ENCODE measurements at regions of chr4 and their contacts with region 1.

Region 1: GRCh38 chr4:73161527-73162185 is 92.1 kb upstream of the COX18 start:
- DNase-seq: no peak
- ATAC-seq: no peak
- H3K4me3 ChIP-seq: no peak overlapping the region
- H3K4me3 Mint-ChIP-seq: no peak overlapping the region
- H3K27ac ChIP-seq: no peak overlapping the region
- H3K27ac Mint-ChIP-seq: no peak overlapping the region
- H3K4me1 ChIP-seq: no peaks in the 10 kb centered on the region
- H3K4me1 Mint-ChIP-seq: no peaks in the 10 kb centered on the region
- H3K27me3 ChIP-seq: no peaks in the 10 kb centered on the region
- H3K27me3 Mint-ChIP-seq: no peaks in the 10 kb centered on the region
- CTCF ChIP-seq: no peak

Region 2: GRCh38 chr4:72817012-72817411 is 344.6 kb before region 1 on chr4:
- CTCF ChIA-PET with region 1: no interaction called
- POLR2A ChIA-PET with region 1: no interaction called
- intact Hi-C with region 1: no loop called
- DNase-seq: no peak
- ATAC-seq: no peak
- H3K4me3 ChIP-seq: no peak overlapping the region
- H3K4me3 Mint-ChIP-seq: no peak overlapping the region
- H3K27ac ChIP-seq: no peak overlapping the region
- H3K27ac Mint-ChIP-seq: no peak overlapping the region
- H3K4me1 ChIP-seq: no peaks in the 10 kb centered on the region
- H3K4me1 Mint-ChIP-seq: no peaks in the 10 kb centered on the region
- H3K27me3 ChIP-seq: no peaks in the 10 kb centered on the region
- H3K27me3 Mint-ChIP-seq: no peaks in the 10 kb centered on the region
- CTCF ChIP-seq: no peak

Region 3: GRCh38 chr4:73007526-73008100 is 154.0 kb before region 1 on chr4:
- CTCF ChIA-PET with region 1: no interaction called
- POLR2A ChIA-PET with region 1: no interaction called
- intact Hi-C with region 1: no loop called
- DNase-seq: no peak
- ATAC-seq: no peak
- H3K4me3 ChIP-seq: no peak overlapping the region
- H3K4me3 Mint-ChIP-seq: no peak overlapping the region
- H3K27ac ChIP-seq: no peak overlapping the region
- H3K27ac Mint-ChIP-seq: no peak overlapping the region
- H3K4me1 ChIP-seq: peaks cover 0 to 4% of the 10 kb centered on the region in 2 donors
- H3K4me1 Mint-ChIP-seq: peaks cover 5% of the 10 kb centered on the region
- H3K27me3 ChIP-seq: peaks cover 0 to 7% (median 2%) of the 10 kb centered on the region in 4 experiments
- H3K27me3 Mint-ChIP-seq: peaks cover 23% of the 10 kb centered on the region
- CTCF ChIP-seq: no peak

Region 4: DNA sequence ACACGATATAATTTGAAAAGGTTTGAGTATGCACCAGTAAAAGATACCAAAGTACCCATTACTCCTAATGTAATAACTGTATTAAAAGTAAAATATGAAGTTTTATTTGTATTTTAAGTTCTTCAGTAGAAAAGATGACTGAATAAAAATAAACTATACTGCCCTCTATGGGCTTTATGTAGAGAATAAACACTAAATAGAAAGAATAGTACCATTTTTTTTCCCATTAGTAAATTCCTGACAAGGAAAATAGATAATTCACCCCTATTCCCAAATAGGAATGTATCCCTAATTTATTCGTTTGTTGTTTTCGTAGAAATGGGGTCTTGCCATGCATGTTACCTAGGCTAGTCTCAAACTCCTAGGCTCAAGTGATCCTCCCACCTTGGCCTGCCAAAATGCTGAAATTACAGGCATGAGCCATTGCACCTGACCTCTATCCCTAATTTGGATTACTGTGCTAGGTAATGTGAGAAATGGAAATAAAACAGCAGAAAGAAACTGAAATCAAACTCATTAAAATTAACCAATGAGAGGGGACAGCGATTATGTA is 18.6 kb before region 1 on chr4:
- CTCF ChIA-PET with region 1: no interaction called
- POLR2A ChIA-PET with region 1: no interaction called
- intact Hi-C with region 1: loop called (anchors 2 kb)
- DNase-seq: no peak
- ATAC-seq: no peak
- H3K4me3 ChIP-seq: no peak overlapping the region
- H3K4me3 Mint-ChIP-seq: no peak overlapping the region
- H3K27ac ChIP-seq: no peak overlapping the region
- H3K27ac Mint-ChIP-seq: no peak overlapping the region
- H3K4me1 ChIP-seq: no peaks in the 10 kb centered on the region
- H3K4me1 Mint-ChIP-seq: no peaks in the 10 kb centered on the region
- H3K27me3 ChIP-seq: no peaks in the 10 kb centered on the region
- H3K27me3 Mint-ChIP-seq: no peaks in the 10 kb centered on the region
- CTCF ChIP-seq: peak; percentile 38